Left ventricle myocardium inferior (tissue), 1 donor: ENCODE measurements at regions of chr16 and their contacts with region 1.

Region 1: DNA sequence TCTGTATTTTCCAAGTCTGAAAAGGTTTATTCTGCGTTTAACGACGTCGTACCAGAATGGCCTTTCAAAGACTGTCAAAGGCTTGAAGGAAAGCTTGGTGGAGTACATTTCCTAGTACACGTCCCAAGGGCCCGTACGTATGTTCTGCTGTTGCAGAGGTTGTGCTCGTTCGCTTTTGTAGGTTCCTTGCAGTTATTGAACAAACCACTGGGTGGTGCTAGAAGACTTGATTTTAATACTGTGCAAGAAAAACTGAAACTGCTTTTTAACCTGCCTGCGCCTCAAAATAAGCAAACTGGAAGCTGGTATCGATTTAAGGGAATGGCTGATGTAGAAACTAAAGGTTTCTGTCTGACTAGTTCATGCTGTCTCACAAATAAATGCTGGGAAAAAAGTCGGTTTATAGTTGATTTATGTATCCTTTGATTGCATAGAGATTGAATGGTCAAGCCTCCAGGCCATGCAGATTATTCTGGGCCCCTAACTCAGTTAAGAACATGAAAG is 54.6 kb downstream of the USP10 start:
- DNase-seq: no peak
- H3K4me3 ChIP-seq: no peak overlapping the region
- H3K27ac ChIP-seq: no peak overlapping the region
- H3K4me1 ChIP-seq: peaks cover 57% of the 10 kb centered on the region
- H3K27me3 ChIP-seq: no peaks in the 10 kb centered on the region
- CTCF ChIP-seq: peak; percentile 90

Region 2: DNA sequence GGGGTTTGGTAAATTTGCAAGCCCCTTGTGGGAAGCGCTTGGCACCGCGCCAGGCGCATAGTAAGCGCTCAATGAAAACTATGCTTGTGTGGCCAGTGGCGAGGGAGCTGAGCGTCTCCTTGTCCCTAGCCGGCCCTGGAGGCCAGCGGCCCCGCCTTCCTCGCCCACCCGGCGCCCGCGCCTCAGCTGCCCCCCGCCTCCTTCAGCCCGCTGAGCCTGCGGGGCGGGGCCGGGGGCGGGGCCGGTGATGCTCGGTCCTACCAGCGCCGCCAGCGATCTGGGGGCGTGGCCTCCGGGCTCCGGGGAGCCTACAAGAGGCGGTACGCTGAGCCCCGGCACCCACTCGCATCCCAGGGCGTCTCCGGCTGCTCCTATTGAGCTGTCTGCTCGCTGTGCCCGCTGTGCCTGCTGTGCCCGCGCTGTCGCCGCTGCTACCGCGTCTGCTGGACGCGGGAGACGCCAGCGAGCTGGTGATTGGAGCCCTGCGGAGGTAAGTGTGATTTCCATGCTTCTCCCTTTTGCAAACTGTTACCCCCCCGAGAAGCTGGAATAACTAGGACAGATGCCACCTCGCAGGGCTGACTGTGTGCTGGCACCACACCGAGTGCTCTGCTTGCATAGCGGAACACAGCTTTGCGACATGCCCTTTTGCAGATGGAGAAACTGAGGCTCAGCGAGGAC is 65.4 kb after region 1 on chr16 and contains the start of gene CRISPLD2:
- intact Hi-C with region 1: no loop called
- DNase-seq: peak; percentile 96
- H3K4me3 ChIP-seq: peak within 1 kb of the TSS; percentile 76
- H3K27ac ChIP-seq: peak within 1 kb of the TSS; percentile 83
- H3K4me1 ChIP-seq: peaks cover 38% of the 10 kb centered on the region
- H3K27me3 ChIP-seq: peaks cover 46% of the 10 kb centered on the region
- CTCF ChIP-seq: no peak
- total RNA-seq, gene CRISPLD2: 12.8 TPM

Region 3: GRCh38 chr16:84952335-84953189 is 198.2 kb after region 1 on chr16:
- intact Hi-C with region 1: loop called (anchors 5 kb)
- DNase-seq: peak; percentile 64
- H3K4me3 ChIP-seq: no peak overlapping the region
- H3K27ac ChIP-seq: peak overlapping the region; percentile 79
- H3K4me1 ChIP-seq: peaks cover 22% of the 10 kb centered on the region
- H3K27me3 ChIP-seq: no peaks in the 10 kb centered on the region
- CTCF ChIP-seq: peak; percentile 93

Region 4: DNA sequence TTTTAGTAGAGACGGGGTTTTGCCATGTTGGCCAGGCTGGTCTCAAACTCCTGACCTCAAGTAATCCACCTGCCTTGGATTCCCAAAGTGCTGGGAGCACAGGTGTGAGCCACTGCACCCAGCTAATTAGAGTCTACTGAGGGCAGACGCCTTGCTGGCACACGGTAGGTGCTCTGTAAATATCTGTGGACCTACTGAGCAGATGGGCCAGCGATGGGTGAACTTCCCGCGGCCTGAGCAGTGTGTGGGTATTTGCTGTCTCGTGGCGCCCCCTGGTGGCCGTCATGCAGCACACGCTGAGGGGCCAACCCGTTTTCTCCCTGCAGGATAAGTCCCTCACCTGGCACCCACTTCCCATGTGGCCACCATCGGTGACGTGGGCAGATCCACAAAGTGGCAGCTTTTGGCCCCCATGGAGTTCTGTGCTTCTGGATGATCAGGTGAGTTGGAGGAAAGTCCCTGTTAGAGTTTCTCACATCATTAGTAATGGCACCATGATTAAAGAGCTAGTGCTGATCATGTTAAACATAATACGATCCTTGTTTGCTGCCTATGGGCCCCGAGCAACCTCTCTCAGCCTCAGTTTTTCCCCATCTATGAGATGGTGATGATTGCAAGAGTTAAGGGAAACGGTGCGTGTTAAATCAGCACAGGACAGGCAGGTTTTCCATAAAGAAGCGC is 216.2 kb after region 1 on chr16:
- intact Hi-C with region 1: loop called (anchors 5 kb)
- DNase-seq: peak; percentile 78
- H3K4me3 ChIP-seq: no peak overlapping the region
- H3K27ac ChIP-seq: no peak overlapping the region
- H3K4me1 ChIP-seq: peaks cover 16% of the 10 kb centered on the region
- H3K27me3 ChIP-seq: peaks cover 5% of the 10 kb centered on the region
- CTCF ChIP-seq: peak; percentile 95